ENCODE measurements at regions of chr2 and their contacts with region 1.

Region 1: GRCh38 chr2:27489498-27490397 is at the start of gene IFT172:
- DNase-seq: peak; percentile 96 to 100 (median 99)
- ATAC-seq: peak; percentile 97 to 99 (median 98)
- H3K4me3 ChIP-seq: peak within 1 kb of the TSS; percentile 38 to 61 (median 45)
- H3K27ac ChIP-seq: peak within 1 kb of the TSS; percentile 43 to 75 (median 58)
- H3K4me1 ChIP-seq: peaks cover 0 to 8% (median 0%) of the 10 kb centered on the region in 3 donors
- H3K27me3 ChIP-seq: no peaks in the 10 kb centered on the region
- CTCF ChIP-seq: no peak
- total RNA-seq, gene IFT172: 10.1 to 28.2 (median 14.7) TPM

Region 2: GRCh38 chr2:27573452-27573851 is 83.7 kb after region 1 on chr2:
- intact Hi-C with region 1: loop called in 1 of 3 experiments (anchors 10 kb)
- DNase-seq: no peak
- ATAC-seq: no peak
- H3K4me3 ChIP-seq: no peak overlapping the region
- H3K27ac ChIP-seq: no peak overlapping the region
- H3K4me1 ChIP-seq: no peaks in the 10 kb centered on the region
- H3K27me3 ChIP-seq: no peaks in the 10 kb centered on the region
- CTCF ChIP-seq: no peak

Region 3: DNA sequence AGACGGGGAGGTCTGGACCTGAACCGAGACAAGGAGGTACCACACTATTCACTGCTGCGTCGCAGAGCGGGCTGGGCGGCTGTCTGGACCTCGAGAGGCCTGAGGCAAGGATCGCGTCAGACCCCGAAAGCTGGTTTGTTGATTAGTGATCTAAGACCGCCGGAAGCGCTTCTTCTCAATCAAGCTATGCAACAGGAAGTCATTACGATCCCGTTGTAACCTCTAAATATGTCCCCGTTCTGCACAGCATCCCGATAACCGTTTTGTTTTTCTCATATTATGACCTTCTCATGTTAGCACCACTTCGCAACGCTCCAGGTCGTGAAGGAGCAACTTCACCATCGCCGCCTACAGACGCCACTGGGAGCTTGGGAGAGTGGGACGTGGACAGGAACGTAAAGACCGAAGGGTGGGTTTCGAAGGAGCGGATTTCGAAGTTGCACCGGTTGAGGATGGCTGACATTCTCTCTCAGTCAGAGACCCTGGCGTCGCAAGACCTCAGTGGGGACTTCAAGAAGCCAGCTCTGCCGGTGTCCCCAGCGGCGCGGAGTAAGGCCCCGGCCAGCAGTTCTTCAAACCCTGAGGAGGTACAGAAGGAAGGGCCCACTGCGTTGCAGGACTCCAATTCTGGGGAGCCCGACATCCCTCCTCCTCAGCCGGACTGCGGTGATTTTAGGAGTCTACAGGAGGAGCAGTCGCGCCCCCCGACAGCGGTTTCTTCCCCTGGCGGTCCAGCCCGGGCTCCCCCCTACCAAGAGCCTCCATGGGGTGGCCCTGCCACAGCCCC is 173.9 kb after region 1 on chr2 and contains the starts of genes SLC4A1AP and SUPT7L:
- intact Hi-C with region 1: no loop called
- DNase-seq: peak; percentile 41 to 76 (median 70)
- ATAC-seq: peak; percentile 84 to 94 (median 91)
- H3K4me3 ChIP-seq: peak within 1 kb of the TSS; percentile 81 to 88 (median 85)
- H3K27ac ChIP-seq: peak within 1 kb of the TSS; percentile 49 to 90 (median 76)
- H3K4me1 ChIP-seq: peaks cover 14 to 29% (median 14%) of the 10 kb centered on the region in 3 donors
- H3K27me3 ChIP-seq: no peaks in the 10 kb centered on the region
- CTCF ChIP-seq: no peak
- total RNA-seq, gene SLC4A1AP: 5.1 to 12.1 (median 8.1) TPM
- total RNA-seq, gene SUPT7L: 8.0 to 18.1 (median 9.9) TPM